ENCODE measurements at regions of chr1 and their contacts with region 1.

Region 1: GRCh38 chr1:162040681-162041080 is 17.0 kb upstream of the OLFML2B start:
- DNase-seq: no peak
- CTCF ChIP-seq: peak; percentile 25

Region 2: GRCh38 chr1:161784968-161785367 is 255.7 kb before region 1 on chr1:
- CTCF ChIA-PET with region 1: interaction called, 236 read pairs
- POLR2A ChIA-PET with region 1: no interaction called
- DNase-seq: no peak
- CTCF ChIP-seq: no peak

Region 3: GRCh38 chr1:161792740-161793139 is 247.9 kb before region 1 on chr1:
- CTCF ChIA-PET with region 1: interaction called, 236 read pairs
- POLR2A ChIA-PET with region 1: interaction called, 3 read pairs
- DNase-seq: peak; percentile 47
- CTCF ChIP-seq: peak; percentile 28

Region 4: GRCh38 chr1:161890574-161890973 is 150.1 kb before region 1 on chr1:
- CTCF ChIA-PET with region 1: no interaction called
- POLR2A ChIA-PET with region 1: no interaction called
- DNase-seq: no peak
- CTCF ChIP-seq: no peak

Region 5: GRCh38 chr1:161986328-161986727 is 54.4 kb before region 1 on chr1:
- CTCF ChIA-PET with region 1: no interaction called
- POLR2A ChIA-PET with region 1: no interaction called
- DNase-seq: no peak
- CTCF ChIP-seq: no peak

Region 6: GRCh38 chr1:162023547-162024501 is 16.9 kb before region 1 on chr1 and contains the start of gene OLFML2B:
- CTCF ChIA-PET with region 1: interaction called, 12 read pairs
- POLR2A ChIA-PET with region 1: no interaction called
- DNase-seq: peak; percentile 58
- CTCF ChIP-seq: no peak

Measured in GM10248 (cell line).